Activated B cell treated with CpG ODN at 0.5 μM for 24 hours (primary cell): ENCODE measurements at regions of chr15 and their contacts with region 1.

Region 1: DNA sequence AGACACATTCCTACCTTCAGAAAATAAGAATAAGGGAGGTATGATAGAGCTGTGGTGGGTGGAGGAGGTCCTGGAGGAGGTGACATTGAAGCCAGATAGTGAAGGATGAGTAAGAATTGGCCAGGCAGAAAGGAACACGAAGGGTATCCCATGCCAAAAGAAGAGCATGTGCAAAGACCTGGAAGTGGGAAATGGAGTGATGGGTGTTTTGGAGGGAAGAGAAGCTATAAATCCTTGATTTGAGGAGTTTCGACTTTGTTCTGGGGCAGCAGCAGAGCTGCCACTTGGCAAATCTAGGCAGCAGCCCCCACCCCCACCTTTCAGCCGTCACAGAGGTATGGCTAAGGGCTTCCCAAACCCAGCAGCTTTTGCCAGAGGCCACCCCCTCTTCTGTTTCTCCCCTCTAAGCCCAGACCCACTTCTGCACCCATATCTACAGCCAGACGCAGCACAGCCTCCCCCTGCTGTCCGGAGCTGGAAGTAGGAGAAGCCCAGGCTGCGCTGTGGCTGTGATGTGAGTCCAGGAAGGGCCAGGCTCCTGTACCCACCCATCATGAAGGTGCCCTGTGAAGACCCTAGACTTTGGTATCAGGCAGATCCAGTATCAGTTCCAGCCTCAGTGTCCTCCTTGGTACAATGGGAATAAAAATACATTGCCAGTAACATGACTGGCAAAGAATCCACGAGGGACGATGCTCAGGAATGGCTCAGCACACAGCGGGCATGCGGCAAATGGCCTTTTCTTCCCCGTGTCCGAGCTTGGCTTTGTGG is 188.7 kb upstream of the LINGO1 start:
- DNase-seq: no peak
- ATAC-seq: no peak
- H3K4me3 Mint-ChIP-seq: no peak overlapping the region
- H3K27ac Mint-ChIP-seq: no peak overlapping the region
- H3K4me1 Mint-ChIP-seq: peaks cover 11% of the 10 kb centered on the region
- H3K27me3 Mint-ChIP-seq: peaks cover 53% of the 10 kb centered on the region
- CTCF ChIP-seq: no peak

Region 2: GRCh38 chr15:77659350-77660321 is 161.7 kb before region 1 on chr15:
- CTCF ChIA-PET with region 1: no interaction called
- POLR2A ChIA-PET with region 1: no interaction called
- intact Hi-C with region 1: loop called (anchors 1 kb)
- DNase-seq: no peak
- ATAC-seq: no peak
- H3K4me3 Mint-ChIP-seq: no peak overlapping the region
- H3K27ac Mint-ChIP-seq: no peak overlapping the region
- H3K4me1 Mint-ChIP-seq: no peaks in the 10 kb centered on the region
- H3K27me3 Mint-ChIP-seq: peaks cover 6% of the 10 kb centered on the region
- CTCF ChIP-seq: no peak